AG04450 (cell line): ENCODE measurements at regions of chr5 and their contacts with region 1.

Region 1: DNA sequence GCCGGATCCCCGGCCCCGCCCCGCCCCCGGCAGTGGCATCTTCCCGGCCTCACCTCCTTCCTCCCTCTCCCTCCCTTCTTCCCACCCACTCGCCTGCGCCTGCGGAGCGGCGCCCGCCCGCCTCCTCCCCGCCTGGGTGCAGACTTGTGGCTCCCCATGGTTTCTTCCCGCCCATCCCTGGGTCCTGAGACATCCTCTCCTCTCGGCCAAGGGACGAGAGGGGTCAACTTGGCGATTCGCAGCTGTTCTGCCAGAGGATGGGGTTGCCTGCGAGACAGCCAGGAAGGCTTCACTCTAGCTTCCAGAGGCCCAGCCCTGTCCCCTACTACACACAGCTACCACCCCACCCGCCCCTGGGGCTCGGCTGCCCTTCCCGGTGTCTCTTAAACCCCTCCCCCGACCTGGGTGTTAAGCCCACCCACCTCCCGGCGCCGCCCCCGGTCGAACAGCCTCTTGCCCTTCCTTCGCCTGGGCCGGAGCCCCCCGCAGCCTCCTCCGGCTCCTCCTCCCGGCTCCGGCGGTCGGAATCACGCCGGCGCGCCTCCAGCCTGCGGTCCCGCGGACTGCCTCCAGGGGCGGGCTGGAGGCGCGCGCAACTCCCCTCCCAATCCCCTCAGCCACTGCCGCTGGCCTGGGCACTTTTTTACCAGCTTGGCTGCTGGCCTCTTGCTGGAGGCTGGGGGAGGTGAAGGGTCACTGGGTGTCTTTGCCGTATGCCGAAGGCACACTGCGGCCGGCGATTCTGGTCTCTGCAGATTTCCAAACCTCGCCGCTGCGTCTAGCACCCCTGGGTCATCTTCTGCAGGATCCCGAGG is 1.9 kb downstream of the JADE2 start:
- DNase-seq: peak; percentile 69
- H3K4me3 ChIP-seq: peak overlapping the region; percentile 73
- H3K27ac ChIP-seq: peak overlapping the region; percentile 70
- H3K27me3 ChIP-seq: no peaks in the 10 kb centered on the region
- CTCF ChIP-seq: peak; percentile 81

Region 2: DNA sequence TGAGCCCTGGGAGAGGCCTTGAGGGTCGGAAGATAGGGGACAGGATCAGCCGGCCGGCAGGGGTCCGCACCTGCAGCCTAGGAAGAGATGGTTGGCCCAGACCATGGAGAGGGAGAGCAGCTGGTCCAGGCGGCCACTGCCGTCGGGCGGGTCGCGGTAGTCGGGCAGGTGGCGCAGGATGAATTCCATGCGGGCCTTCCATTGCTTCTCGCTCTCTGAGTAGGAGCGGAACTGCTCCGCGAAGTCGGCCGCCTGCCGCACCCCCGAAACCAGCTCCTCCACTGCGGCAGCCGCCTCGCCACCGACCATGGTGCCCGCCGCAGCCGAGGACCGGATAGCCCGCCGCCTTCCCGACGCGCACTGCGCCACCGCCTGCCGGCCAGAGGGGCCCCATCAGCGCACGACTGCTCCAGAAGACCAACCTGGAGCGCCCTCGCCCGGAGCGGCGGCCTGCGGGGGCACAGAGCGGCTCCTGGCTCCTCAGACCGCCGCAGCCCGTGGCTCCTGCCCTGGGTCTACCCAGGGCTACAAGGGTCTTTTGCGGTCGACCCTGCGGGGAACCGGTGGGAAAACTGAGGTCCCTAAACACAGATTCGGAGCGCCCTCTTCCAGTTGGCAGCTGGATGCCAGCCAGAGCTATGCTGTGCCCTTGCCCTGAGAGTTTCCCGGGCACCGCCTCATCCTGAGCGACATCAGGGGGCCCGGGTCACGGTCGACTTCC is 115.6 kb before region 1 on chr5 and contains the start of gene CDKN2AIPNL:
- CTCF ChIA-PET with region 1: interaction called, 21 read pairs
- POLR2A ChIA-PET with region 1: interaction called, 6 read pairs
- DNase-seq: peak; percentile 61
- H3K4me3 ChIP-seq: peak within 1 kb of the TSS; percentile 79
- H3K27ac ChIP-seq: peak within 1 kb of the TSS; percentile 39
- H3K27me3 ChIP-seq: no peaks in the 10 kb centered on the region
- CTCF ChIP-seq: peak; percentile 67
- polyA plus RNA-seq, gene CDKN2AIPNL: 16.7 and 20.8 TPM in 2 replicates

Region 3: DNA sequence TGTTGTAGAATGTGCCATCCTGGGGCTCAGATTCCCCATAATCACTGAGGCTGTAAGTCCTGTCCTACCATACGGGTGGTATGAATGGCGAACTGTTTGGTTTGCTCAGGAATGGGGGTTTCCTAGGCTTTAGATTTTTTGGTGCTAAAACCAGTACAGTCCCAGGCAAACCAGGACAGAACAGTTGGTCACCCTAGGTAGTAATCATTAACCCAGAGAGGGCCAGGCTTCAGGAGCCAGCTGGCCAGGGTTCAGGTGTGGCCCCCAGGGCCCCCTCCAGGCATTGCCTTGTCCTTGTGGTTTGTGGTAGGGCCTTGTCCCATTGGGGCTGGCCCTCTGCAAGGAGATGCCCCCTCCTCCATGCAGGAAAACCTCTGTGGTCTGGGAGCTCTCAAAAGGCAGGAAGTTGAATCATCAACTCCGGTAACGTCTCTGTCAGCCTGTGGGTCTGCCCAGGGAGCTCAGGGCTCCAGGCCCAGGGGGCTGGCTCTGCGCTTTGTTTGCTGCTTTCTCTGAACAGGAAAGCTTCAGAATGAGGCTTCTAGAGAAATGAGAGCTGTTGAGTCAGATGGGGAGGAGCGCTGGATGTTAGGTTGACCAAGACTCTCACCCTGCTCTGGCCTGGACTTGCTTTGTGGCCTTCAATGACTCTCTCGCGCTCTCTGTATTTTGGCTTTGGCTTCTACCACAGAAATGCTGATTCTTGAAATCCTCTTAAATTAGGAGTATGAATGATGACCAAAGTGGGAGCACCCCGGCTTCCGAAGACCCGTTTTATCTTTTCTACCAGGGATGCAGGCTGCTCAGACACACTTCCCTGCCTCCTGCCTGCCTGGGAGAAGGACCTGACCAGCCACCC is 24.0 kb before region 1 on chr5:
- CTCF ChIA-PET with region 1: interaction called, 7 read pairs
- POLR2A ChIA-PET with region 1: interaction called, 14 read pairs
- DNase-seq: peak; percentile 88
- H3K4me3 ChIP-seq: no peak overlapping the region
- H3K27ac ChIP-seq: peak overlapping the region; percentile 98
- H3K27me3 ChIP-seq: no peaks in the 10 kb centered on the region
- CTCF ChIP-seq: no peak

Region 4: GRCh38 chr5:134511788-134512650 is 15.3 kb before region 1 on chr5:
- CTCF ChIA-PET with region 1: interaction called, 4 read pairs
- POLR2A ChIA-PET with region 1: interaction called, 11 read pairs
- DNase-seq: no peak
- H3K4me3 ChIP-seq: no peak overlapping the region
- H3K27ac ChIP-seq: peak overlapping the region; percentile 75
- H3K27me3 ChIP-seq: no peaks in the 10 kb centered on the region
- CTCF ChIP-seq: peak; percentile 15; the same call in 1 of the 2 replicates

Region 5: DNA sequence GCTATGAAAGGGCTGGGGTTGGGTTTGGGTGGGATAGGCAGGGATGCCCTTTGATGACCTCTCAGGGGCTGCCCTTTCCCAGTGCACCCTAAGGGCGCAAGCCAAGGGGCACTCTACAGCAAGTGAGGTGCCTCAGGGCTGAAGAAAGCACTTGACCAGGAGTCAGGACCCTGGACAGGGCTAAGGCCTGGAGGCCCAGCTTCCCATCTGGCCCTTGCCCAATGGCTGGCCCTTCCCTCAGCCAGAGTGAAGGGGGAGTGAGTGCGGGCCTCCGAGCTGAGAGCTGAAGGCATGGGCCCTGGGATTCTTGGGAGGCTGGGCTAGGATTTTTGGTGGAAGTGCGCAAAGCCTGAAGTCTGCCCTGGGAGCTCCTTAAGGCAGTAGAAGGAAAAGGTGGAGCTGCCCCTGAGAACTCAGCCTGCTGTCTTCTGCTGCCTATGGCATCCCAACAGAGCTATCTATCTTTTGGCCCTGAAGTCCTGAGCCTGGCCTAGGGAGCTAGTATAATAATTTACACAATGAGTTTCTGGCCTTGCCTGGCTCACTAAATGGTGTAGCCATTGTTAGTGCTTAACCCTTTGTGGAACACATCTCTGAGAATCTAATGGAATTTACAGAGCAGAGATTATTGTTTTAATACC is 14.5 kb after region 1 on chr5:
- CTCF ChIA-PET with region 1: interaction called, 26 read pairs
- POLR2A ChIA-PET with region 1: interaction called, 13 read pairs
- DNase-seq: no peak
- H3K4me3 ChIP-seq: no peak overlapping the region
- H3K27ac ChIP-seq: no peak overlapping the region
- H3K27me3 ChIP-seq: no peaks in the 10 kb centered on the region
- CTCF ChIP-seq: no peak

Region 6: GRCh38 chr5:134577796-134578363 is 50.5 kb after region 1 on chr5:
- CTCF ChIA-PET with region 1: interaction called, 25 read pairs
- POLR2A ChIA-PET with region 1: interaction called, 4 read pairs
- DNase-seq: peak; percentile 37
- H3K4me3 ChIP-seq: no peak overlapping the region
- H3K27ac ChIP-seq: peak overlapping the region; percentile 21
- H3K27me3 ChIP-seq: no peaks in the 10 kb centered on the region
- CTCF ChIP-seq: peak; percentile 88